WTC11 (cell line): ENCODE measurements at regions of chr17 and their contacts with region 1.

Region 1: DNA sequence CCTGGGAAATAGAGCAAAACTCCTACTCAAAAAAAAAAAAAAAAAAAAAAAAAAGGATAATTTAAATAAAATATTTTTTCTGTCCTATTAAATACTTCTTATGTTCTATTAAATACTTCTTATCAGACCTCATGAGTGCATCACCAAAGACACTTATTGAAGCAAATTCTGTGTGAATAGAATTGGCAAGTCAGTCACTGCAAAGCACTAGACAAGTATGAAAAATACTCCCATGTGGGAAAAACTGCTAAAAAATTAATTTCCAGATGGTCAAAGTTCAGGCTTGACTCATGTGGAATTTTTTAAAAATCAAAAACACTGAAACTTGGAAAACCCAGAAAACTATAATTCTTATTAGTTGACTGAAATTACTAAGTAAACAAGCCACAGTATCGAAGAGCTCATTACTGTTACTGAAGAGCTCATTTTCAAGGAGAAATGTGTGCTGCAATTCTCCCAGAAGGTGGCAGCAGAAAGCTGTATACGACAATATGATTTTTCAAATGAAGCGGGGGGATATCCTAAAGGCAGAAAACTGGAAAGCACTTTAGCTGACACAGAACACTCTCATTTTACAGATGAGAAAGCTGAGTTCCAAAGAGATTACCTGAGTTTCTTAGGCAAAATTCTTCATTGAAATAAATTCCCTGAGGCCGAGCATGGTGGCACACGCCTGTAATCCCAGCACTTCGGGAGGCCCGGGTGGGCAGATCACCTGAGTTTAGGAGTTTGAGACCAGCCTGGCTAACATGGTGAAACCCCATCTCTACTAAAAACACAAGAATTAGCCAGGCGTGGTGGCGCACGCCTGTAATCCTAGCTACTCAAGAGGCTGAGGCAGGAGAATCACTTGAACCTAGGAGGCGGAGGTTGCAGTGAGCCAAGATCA is 15.9 kb upstream of the FBXO47 start:
- DNase-seq: peak; percentile 47
- ATAC-seq: peak; percentile 67
- H3K4me3 Mint-ChIP-seq: no peak overlapping the region
- H3K27ac Mint-ChIP-seq: no peak overlapping the region
- H3K4me1 Mint-ChIP-seq: no peaks in the 10 kb centered on the region
- H3K27me3 Mint-ChIP-seq: no peaks in the 10 kb centered on the region
- CTCF ChIP-seq: peak; percentile 35; the same call in 1 of the 2 replicates

Region 2: DNA sequence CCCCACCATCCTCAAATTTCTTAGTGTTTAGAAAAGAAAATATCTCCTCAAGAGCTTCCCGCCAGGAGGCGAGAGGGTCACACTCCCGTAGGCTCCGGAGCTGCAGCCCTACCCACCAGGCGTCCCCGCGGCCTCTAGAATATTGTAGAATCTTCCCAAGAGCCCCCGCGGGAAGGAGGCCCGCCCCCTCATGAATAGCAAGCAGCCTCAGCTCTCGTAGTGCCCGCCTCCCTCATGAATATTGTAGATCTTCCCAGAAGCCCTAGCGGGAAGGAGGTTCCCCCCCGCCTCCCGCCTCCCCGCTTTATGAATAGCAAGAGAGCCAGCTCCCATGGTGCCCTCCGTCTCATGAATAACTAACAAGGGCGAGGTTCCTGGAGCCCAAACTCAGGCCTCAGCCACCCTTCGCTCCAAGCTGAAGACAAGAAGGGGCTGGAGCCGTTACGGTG is 15.8 kb before region 1 on chr17 and contains the start of gene FBXO47:
- CTCF ChIA-PET with region 1: interaction called, 30 read pairs
- POLR2A ChIA-PET with region 1: no interaction called
- DNase-seq: peak; percentile 96
- ATAC-seq: peak; percentile 98
- H3K4me3 Mint-ChIP-seq: peak within 1 kb of the TSS; percentile 67
- H3K27ac Mint-ChIP-seq: peak within 1 kb of the TSS; percentile 89
- H3K4me1 Mint-ChIP-seq: peaks cover 14% of the 10 kb centered on the region
- H3K27me3 Mint-ChIP-seq: no peaks in the 10 kb centered on the region; the same call in 1 of the 2 replicates
- CTCF ChIP-seq: no peak
- total RNA-seq, gene FBXO47: not detected in 3 replicates

Region 3: DNA sequence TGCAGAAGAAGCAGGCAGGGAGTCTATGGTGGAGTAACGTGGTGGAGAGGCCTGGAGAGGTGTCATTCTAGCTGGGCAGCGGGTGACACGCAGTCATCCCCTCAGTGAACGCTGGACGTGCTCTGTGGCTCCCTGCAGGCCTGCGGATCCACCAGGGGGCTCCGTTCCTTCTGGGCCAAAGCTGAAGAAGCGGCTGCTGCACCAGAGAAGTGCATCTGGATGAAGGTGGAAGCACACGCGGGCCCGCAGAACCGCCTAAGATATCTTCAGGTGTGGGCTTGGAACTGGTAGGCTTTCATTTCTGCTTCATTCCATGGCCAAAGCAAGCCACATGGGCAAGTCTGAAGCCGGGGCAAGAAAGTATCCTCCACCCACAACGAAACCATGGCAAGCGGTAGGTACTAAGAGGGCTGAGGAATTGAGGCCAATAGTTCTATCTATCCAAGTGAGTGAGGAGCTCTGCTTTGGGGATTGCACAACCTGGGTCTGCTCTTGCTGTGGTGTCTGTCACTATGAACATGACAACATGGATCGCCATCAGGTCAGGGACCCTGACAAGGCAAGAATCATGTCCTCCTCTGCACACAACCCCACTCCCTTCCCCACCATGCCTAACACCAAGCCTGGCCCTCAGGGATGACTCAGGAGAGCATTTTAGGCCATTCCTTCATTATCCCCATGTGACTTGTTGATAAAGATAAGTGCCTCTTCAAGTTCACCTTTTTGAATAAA is 63.0 kb after region 1 on chr17:
- CTCF ChIA-PET with region 1: interaction called, 11 read pairs
- POLR2A ChIA-PET with region 1: no interaction called
- DNase-seq: peak; percentile 56
- ATAC-seq: peak; percentile 83
- H3K4me3 Mint-ChIP-seq: no peak overlapping the region
- H3K27ac Mint-ChIP-seq: peak overlapping the region; percentile 96
- H3K4me1 Mint-ChIP-seq: 0 out of 2 replicates have a peak, but pooled peaks cover 4% of the 10 kb centered on the region
- H3K27me3 Mint-ChIP-seq: peaks cover 8% of the 10 kb centered on the region
- CTCF ChIP-seq: no peak

Region 4: DNA sequence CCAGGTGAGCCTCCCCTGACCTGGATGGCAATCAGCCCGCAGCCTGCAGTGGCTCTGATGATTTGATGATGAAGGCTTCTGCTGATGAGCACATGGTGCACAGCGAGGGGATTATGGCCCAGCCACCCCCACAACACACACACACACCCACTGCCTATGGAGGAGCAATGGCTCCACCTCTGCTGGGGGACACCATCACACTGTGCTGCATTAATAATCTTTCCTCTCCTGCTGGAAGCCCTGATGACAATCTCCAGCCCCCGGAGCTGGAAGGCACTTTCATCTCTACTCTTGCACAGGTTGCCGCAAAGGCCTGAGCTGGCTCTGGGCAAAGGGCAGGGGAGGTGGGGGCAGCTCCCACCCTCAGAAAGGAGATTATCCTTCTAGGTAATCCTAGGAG is 88.5 kb after region 1 on chr17:
- CTCF ChIA-PET with region 1: interaction called, 10 read pairs
- POLR2A ChIA-PET with region 1: no interaction called
- DNase-seq: no peak
- ATAC-seq: no peak
- H3K4me3 Mint-ChIP-seq: no peak overlapping the region
- H3K27ac Mint-ChIP-seq: no peak overlapping the region
- H3K4me1 Mint-ChIP-seq: peaks cover 8% of the 10 kb centered on the region
- H3K27me3 Mint-ChIP-seq: no peaks in the 10 kb centered on the region
- CTCF ChIP-seq: no peak

Region 5: GRCh38 chr17:39115135-39115534 is 132.0 kb after region 1 on chr17:
- CTCF ChIA-PET with region 1: interaction called, 16 read pairs
- POLR2A ChIA-PET with region 1: no interaction called
- DNase-seq: no peak
- ATAC-seq: no peak
- H3K4me3 Mint-ChIP-seq: no peak overlapping the region
- H3K27ac Mint-ChIP-seq: no peak overlapping the region
- H3K4me1 Mint-ChIP-seq: no peaks in the 10 kb centered on the region
- H3K27me3 Mint-ChIP-seq: no peaks in the 10 kb centered on the region; the same call in 1 of the 2 replicates
- CTCF ChIP-seq: no peak

Region 6: DNA sequence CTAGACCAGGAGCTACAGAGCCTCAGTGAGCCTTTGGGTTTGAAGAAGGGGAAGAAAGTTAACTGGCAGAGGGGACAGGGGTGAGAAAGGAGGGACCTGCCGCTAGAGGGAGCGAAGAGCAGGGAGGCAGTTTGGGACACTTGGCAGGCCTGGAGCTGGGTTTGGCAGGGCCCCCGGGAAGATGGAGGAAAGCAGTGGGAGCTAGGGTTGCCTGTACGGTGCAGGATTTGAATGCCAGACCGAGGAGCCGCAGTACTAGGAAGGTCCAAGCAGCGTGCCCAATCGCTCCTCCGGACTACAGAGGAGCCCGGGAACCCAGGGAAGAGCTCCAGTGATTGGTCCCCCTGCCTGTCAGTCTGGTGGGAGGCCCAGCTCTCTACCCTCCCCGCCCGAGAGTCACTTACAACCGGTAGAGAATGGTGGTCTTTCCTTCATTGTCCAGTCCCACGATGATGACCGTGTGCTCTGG is 181.6 kb after region 1 on chr17:
- CTCF ChIA-PET with region 1: interaction called, 85 read pairs
- POLR2A ChIA-PET with region 1: no interaction called
- DNase-seq: peak; percentile 93
- ATAC-seq: peak; percentile 96
- H3K4me3 Mint-ChIP-seq: peak overlapping the region; percentile 94
- H3K27ac Mint-ChIP-seq: peak overlapping the region; percentile 70
- H3K4me1 Mint-ChIP-seq: peaks cover 21% of the 10 kb centered on the region
- H3K27me3 Mint-ChIP-seq: peaks cover 47% of the 10 kb centered on the region
- CTCF ChIP-seq: peak; percentile 53; the same call in 1 of the 2 replicates

Region 7: DNA sequence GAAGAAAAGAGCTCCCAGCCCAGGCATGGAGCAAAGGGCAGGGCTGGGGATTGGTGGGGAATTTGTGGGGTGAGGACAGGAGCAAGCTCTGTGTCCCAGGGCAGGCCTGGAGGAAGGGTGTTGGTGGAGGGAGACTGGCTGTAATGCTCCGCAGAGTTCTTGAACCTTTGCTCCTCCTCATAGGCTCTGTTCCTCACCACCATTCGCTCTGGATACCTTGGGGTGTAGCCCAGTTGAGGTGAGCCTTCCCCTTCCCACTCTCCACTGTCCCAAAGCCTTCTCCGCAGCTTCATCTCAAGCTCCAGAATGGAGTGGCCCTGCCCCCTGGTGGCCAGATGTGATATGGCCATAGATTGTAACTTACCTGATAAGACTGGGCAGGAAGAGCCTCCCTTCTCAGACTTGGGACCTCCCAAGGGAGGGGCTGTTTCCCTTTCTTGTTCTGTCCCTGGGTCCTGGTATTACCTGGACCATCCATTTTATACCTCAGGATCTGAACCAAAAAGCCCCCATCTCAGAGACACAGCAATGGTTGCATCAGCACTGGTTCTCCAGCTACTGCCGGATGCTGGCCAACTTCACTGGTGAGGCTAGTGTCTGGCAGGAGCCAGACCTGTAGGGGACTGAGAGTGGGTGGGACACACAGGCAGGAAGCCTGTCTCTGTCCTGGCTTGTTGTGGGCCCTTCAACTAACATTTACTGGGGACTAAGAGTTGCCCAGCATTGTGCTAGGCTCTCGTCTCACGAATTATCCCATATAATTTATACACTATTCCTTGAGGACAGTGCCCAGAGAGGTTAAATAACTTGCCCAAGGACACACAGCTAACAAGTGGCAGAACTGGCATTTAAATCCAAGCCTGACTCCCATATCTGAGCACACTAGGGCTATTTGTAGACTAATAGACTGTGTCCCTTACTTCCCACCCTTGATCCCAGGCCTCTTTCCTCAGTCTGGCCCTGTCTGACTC is 261.8 kb after region 1 on chr17:
- CTCF ChIA-PET with region 1: interaction called, 20 read pairs
- POLR2A ChIA-PET with region 1: no interaction called
- DNase-seq: peak; percentile 98
- ATAC-seq: peak; percentile 92
- H3K4me3 Mint-ChIP-seq: no peak overlapping the region
- H3K27ac Mint-ChIP-seq: no peak overlapping the region
- H3K4me1 Mint-ChIP-seq: peaks cover 22% of the 10 kb centered on the region
- H3K27me3 Mint-ChIP-seq: no peaks in the 10 kb centered on the region; the same call in 1 of the 2 replicates
- CTCF ChIP-seq: peak; percentile 94